Activated CD4-positive, alpha-beta T cell treated with anti-CD3 and anti-CD28 coated beads for 36 hours (primary cell): ENCODE measurements at regions of chr6 and their contacts with region 1.

Region 1: DNA sequence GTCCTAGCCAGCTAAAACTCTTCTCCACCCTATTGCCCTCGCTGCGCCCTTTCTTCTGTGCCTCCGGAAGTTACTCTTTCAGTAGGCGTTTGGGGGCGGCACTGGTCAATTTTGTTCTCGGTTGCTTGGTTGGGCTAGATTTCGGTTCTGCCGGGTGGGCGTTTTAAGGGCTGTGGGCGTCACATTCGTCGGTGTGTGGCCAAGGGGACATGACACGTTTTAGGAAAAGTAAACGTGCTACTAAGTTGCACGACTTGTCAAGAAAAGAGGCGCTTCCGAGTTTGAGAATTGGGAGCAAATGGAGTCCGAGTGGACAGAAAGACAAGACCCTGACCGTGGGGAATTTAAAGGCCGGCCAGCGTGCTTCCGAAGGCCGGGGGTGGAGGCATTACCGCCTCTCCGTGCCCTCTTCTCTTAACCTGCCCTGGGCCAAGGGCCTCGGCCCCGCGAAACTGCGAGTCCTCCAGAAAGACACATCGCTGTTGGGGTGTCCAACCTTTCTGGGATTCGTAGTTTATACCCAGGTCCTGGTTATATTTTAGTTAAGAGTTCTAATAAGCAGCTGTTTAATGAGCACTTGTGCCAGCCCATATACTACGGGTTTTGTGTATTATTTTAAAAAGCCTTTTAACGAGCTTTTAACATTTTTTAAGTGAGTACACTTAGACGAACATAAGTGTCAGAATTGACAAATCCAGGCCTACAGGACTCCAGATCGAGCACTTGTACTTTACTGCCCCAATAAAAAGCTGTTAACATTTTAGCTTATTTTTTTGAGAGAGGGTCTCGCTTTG is 661 bp upstream of the BAG6 start:
- DNase-seq: peak; percentile 91
- ATAC-seq: peak; percentile 71
- H3K4me3 Mint-ChIP-seq: peak overlapping the region; percentile 88
- H3K27ac Mint-ChIP-seq: peak overlapping the region; percentile 96
- H3K4me1 Mint-ChIP-seq: peaks cover 38% of the 10 kb centered on the region
- H3K27me3 Mint-ChIP-seq: no peaks in the 10 kb centered on the region

Region 2: DNA sequence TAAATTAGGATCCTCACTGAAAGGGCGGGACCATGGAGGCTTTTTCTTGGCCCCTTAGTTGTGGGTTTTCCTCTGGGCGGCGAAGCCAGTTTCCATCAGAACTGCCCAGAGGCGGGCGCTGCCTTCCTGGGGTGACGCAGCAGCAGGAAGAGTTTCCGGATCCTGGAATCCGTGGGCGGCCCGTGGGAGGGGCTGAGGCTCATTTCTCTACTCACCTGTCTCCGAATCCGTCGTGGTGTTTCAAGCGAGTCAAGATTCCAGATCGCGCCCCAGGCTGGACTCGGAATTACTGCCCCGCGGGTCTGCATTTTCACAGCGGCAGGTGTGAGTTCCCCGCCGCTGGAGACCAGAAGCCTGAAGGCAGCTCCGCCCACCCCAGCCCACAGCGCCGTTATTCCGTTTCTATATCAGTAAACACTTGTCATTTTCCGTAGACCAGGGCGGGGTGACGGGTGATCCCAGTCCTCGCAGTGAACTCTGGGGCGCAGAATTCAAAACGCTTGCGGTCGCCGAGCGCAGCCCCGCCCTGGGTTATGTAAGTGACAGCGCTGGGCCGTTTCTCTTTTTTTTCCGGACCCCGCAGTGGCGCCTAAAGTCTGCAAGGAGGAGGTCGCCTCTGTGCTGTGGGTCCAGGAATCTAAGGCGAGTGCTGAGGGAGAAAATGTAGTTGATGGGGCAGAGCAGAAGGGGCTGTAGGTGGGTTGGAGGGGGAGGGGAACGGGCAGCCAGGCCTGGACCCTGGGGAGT is 455.4 kb before region 1 on chr6:
- CTCF ChIA-PET with region 1: no interaction called
- POLR2A ChIA-PET with region 1: no interaction called
- intact Hi-C with region 1: loop called in 1 of 2 experiments (anchors 5 kb)
- DNase-seq: peak; percentile 97
- ATAC-seq: peak; percentile 69
- H3K4me3 Mint-ChIP-seq: peak overlapping the region; percentile 76
- H3K27ac Mint-ChIP-seq: peak overlapping the region; percentile 80
- H3K4me1 Mint-ChIP-seq: peaks cover 50% of the 10 kb centered on the region
- H3K27me3 Mint-ChIP-seq: no peaks in the 10 kb centered on the region

Region 3: DNA sequence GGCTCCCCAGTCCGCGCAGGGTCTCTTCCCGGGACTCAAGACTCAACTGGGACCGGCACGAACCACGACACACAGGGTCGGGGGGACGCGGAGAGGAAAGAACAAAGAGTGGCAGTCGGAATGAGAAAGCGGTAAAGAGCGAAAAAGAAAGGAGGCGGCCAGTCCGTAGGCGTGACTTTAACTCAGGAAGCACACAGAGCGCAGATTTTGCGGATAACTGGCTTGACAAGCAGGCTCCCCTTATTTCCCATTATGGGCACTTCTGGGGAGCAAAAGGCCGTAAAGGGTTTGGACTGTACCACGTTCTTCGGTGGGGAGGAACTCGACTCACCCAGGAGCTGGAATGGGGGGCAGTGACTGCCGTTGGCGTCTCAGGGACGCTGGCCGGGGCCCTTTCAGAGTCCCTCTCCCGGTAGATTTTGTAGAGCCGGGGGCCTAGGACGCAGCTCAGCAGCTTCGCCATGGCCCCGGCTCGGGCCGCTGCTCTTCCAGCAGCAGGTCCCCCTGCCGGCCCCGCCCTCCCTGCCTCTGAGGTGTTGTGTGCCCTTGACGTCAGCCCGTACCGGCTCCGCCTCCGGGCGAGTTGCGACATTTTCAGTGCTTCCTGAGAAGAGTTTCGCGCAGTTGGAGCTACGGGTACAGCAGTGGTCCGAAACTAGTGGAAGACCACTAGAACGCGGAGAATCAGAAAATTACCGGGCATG is 49.8 kb after region 1 on chr6 and contains the start of gene ABHD16A:
- CTCF ChIA-PET with region 1: no interaction called
- POLR2A ChIA-PET with region 1: interaction called, 4 read pairs
- intact Hi-C with region 1: loop called (anchors 1 to 2 kb)
- DNase-seq: peak; percentile 99
- ATAC-seq: peak; percentile 91
- H3K4me3 Mint-ChIP-seq: peak within 1 kb of the TSS; percentile 99
- H3K27ac Mint-ChIP-seq: peak within 1 kb of the TSS; percentile 97
- H3K4me1 Mint-ChIP-seq: peaks cover 24% of the 10 kb centered on the region
- H3K27me3 Mint-ChIP-seq: no peaks in the 10 kb centered on the region
- total RNA-seq, gene ABHD16A: 20.9 to 25.1 TPM

Region 4: GRCh38 chr6:31827286-31828079 is 174.4 kb after region 1 on chr6 and contains the start of gene HSPA1B:
- CTCF ChIA-PET with region 1: interaction called, 4 read pairs
- POLR2A ChIA-PET with region 1: interaction called, 6 read pairs
- intact Hi-C with region 1: loop called in 1 of 2 experiments (anchors 1 kb)
- DNase-seq: peak; percentile 97
- ATAC-seq: peak; percentile 83
- H3K4me3 Mint-ChIP-seq: peak within 1 kb of the TSS; percentile 77
- H3K27ac Mint-ChIP-seq: peak within 1 kb of the TSS; percentile 92
- H3K4me1 Mint-ChIP-seq: peaks cover 43% of the 10 kb centered on the region
- H3K27me3 Mint-ChIP-seq: no peaks in the 10 kb centered on the region
- total RNA-seq, gene HSPA1B: 54.6 to 61.1 TPM

Region 5: GRCh38 chr6:31862344-31863227 is 209.5 kb after region 1 on chr6 and contains the start of gene NEU1:
- CTCF ChIA-PET with region 1: no interaction called
- POLR2A ChIA-PET with region 1: no interaction called
- intact Hi-C with region 1: loop called in 1 of 2 experiments (anchors 1 kb)
- DNase-seq: peak; percentile 100
- ATAC-seq: peak; percentile 98
- H3K4me3 Mint-ChIP-seq: peak within 1 kb of the TSS; percentile 90
- H3K27ac Mint-ChIP-seq: peak within 1 kb of the TSS; percentile 91
- H3K4me1 Mint-ChIP-seq: peaks cover 27% of the 10 kb centered on the region
- H3K27me3 Mint-ChIP-seq: no peaks in the 10 kb centered on the region
- total RNA-seq, gene NEU1: 11.6 to 11.8 TPM

Region 6: DNA sequence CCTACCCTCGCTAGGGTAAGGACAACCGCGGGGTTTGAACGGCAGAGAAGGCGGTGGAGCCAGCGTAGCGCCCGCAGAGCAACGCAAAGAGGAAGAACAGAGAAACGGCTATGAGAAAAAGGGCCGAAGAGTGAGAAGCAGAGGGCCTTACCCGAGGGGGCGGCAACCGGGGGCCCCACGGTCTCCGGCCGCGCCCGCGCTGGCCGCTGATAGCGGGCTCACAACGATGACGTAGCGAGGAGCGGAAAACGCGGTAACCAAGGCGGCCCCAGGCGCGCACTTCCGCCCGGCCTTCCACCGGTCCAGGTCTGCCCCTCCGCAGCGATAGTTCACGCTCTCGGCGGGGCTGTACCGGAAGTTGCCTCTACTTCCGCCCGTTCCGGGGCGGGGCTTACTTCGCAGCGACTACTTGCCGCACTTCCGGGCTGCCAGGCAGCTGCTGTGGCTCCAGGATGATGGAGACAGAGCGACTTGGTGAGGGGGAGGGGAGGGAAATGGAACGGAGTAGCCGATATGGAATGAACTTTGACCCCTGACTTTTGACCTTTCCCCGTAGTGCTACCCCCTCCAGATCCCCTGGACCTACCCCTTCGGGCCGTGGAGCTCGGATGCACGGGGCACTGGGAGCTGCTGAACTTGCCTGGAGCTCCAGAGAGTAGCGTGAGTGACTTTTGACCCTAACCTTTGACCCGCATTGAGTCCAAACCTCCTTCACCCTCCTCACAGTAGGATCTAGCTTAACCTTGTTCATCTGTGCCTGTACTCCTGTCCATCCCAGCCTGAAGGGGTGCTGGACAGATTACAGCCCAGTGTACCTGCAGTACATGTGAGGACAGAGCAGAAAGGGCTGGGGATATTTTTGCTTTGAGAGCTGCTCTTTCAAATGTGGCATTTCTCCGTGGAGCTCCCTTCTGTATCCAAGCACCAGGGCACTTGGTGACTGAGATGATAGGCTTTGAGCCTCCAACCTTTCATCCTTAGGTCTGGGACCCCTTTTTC is 305.9 kb after region 1 on chr6 and contains the starts of genes NELFE and SKIC2:
- CTCF ChIA-PET with region 1: interaction called, 3 read pairs
- POLR2A ChIA-PET with region 1: interaction called, 3 read pairs
- intact Hi-C with region 1: loop called in 1 of 2 experiments (anchors 1 kb)
- DNase-seq: peak; percentile 99
- ATAC-seq: peak; percentile 99
- H3K4me3 Mint-ChIP-seq: peak within 1 kb of the TSS; percentile 95
- H3K27ac Mint-ChIP-seq: peak within 1 kb of the TSS; percentile 98
- H3K4me1 Mint-ChIP-seq: peaks cover 34% of the 10 kb centered on the region
- H3K27me3 Mint-ChIP-seq: no peaks in the 10 kb centered on the region
- total RNA-seq, gene NELFE: 74.3 to 95.1 TPM
- total RNA-seq, gene SKIC2: 90.2 to 104 TPM